Heart left ventricle (tissue), 16 donors: ENCODE measurements at regions of chr6 and their contacts with region 1.

Region 1: GRCh38 chr6:148401571-148401970 is 58.9 kb downstream of the SASH1 start:
- DNase-seq: no peak
- ATAC-seq: no peak
- H3K4me3 ChIP-seq: no peak overlapping the region
- H3K27ac ChIP-seq: peak overlapping the region in 2 of 12 donors; percentile 47 to 58
- H3K4me1 ChIP-seq: peaks cover 10 to 77% (median 44%) of the 10 kb centered on the region in 12 donors
- H3K27me3 ChIP-seq: no peaks in the 10 kb centered on the region
- CTCF ChIP-seq: no peak
- POLR2A ChIP-seq: no peak

Region 2: DNA sequence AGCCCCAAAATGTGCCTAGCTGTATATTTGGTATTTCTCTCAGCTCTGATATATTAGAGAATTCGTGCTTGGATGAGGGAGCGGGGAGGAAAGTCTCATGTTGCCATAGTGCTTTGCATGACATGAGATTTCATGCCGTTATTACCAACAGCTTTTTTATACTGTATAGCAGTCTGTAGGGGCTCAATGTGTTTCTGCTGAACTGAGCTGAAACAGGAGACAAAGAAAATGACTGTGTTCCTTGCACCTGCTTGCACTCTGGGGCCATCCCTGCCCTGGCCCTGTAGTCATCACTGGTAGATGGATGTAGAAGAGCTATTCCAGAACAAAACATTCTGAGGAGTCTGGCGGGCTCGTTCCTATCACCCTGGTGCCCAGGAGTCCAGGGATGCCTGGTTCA is 186.9 kb before region 1 on chr6:
- intact Hi-C with region 1: no loop called
- DNase-seq: no peak
- ATAC-seq: no peak
- H3K4me3 ChIP-seq: no peak overlapping the region
- H3K27ac ChIP-seq: no peak overlapping the region
- H3K4me1 ChIP-seq: peaks cover 0 to 15% (median 2%) of the 10 kb centered on the region in 12 donors
- H3K27me3 ChIP-seq: no peaks in the 10 kb centered on the region
- CTCF ChIP-seq: no peak
- POLR2A ChIP-seq: no peak

Region 3: GRCh38 chr6:148293181-148293995 is 108.2 kb before region 1 on chr6:
- intact Hi-C with region 1: no loop called
- DNase-seq: peak in 4 of 5 donors; percentile 27 to 70 (median 48)
- ATAC-seq: peak in 3 of 4 donors; percentile 43 to 72 (median 67)
- H3K4me3 ChIP-seq: no peak overlapping the region
- H3K27ac ChIP-seq: peak overlapping the region in 8 of 12 donors; percentile 1 to 63 (median 39)
- H3K4me1 ChIP-seq: peaks cover 0 to 58% (median 17%) of the 10 kb centered on the region in 12 donors
- H3K27me3 ChIP-seq: no peaks in the 10 kb centered on the region
- CTCF ChIP-seq: no peak
- POLR2A ChIP-seq: no peak

Region 4: GRCh38 chr6:148440877-148441453 is 39.4 kb after region 1 on chr6:
- intact Hi-C with region 1: loop called in 1 of 10 experiments (anchors 5 kb)
- DNase-seq: peak; percentile 48 to 72 (median 58)
- ATAC-seq: peak; percentile 81 to 91 (median 84)
- H3K4me3 ChIP-seq: no peak overlapping the region
- H3K27ac ChIP-seq: peak overlapping the region in 11 of 12 donors; percentile 39 to 73 (median 62)
- H3K4me1 ChIP-seq: peaks cover 6 to 44% (median 15%) of the 10 kb centered on the region in 12 donors
- H3K27me3 ChIP-seq: no peaks in the 10 kb centered on the region
- CTCF ChIP-seq: no peak
- POLR2A ChIP-seq: no peak